H1 (cell line): ENCODE measurements at regions of chr5 and their contacts with region 1.

Region 1: DNA sequence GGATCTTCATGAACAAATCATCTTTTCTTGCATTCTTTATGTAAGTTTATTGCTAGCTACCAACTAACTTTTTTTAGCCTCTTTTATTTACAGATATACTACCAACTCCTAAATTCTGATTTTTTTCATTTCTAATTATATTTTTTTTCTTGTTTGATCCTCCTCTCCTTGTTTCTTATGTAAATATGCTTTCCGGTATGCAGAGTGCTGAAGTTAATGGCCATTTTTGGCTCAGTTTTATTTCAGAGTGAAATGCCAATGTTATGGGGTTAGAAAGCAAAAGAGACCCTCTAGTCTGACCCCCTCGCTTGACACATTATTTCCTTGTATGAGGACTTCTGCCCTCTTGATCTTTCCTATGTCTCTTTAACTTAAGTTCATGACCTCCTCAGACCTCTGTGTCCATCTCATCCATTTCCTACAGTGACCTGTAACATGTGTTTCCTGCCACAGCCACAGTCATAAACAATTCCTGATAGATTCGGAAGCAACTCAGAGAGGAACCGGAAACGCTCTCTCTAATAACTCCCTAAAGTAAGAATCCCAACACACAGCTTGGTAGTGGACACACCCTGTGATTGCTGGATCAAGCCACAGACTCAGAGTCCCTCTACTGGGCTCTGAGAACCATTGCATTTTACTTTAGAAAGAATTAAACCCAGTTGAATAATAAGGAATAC is 42.9 kb upstream of the AFAP1L1 start:
- DNase-seq: no peak
- H3K4me3 ChIP-seq: no peak overlapping the region
- H3K27ac ChIP-seq: no peak overlapping the region
- H3K4me1 ChIP-seq: peaks cover 0 to 3% (median 0%) of the 10 kb centered on the region in 4 experiments; a peak in 1 of 7 replicates
- H3K27me3 ChIP-seq: no peaks in the 10 kb centered on the region
- CTCF ChIP-seq: peak; percentile 15 to 67 (median 60)
- EP300 ChIP-seq: no peak
- POLR2A ChIP-seq: no peak
- RAD21 ChIP-seq: peak; percentile 77 to 82

Region 2: DNA sequence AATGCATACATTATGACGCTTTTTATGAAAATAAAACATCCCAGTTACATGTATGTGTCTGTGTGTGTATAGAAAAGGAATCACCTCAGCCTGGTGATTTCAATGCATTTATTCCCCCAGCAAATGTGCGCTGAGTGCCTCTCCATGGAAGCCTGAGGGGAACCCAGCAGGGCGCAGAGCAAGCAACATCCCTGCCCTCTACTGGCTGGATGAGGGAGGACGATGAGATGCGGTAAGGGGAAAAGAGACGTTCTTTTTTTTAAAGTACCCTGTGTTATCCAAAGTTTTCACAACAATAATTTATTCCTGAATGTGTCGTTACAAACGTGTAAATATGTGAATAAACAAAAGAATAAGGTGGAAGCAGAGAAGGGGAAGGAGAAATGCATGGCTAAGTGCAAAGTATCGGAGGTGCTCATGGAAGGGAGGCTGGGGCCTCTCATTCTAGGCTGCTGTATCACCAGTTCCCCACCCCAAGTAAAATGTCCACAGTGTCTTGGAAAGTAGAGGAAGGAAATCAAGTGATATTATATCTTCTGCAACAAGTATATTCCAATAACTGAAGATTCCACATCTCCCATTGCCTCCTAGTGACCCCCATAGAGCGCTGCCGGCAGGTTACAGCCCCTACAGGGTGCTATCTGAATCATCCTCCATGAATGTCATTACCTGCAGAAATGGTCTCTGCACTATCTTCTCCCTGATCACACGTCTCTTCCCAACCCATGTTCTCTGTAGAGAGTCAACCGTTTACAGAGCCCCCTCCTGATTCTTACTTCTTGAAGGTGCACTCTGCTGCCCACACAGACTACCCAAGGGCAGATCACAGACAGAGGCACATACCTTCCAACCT is 100.5 kb before region 1 on chr5:
- CTCF ChIA-PET with region 1: interaction called, 18 read pairs
- POLR2A ChIA-PET with region 1: no interaction called
- DNase-seq: peak in 1 of 2 experiments; percentile 66
- H3K4me3 ChIP-seq: no peak overlapping the region
- H3K27ac ChIP-seq: no peak overlapping the region
- H3K4me1 ChIP-seq: peaks cover 0 to 9% (median 0%) of the 10 kb centered on the region in 4 experiments; a peak in 3 of 7 replicates
- H3K27me3 ChIP-seq: no peaks in the 10 kb centered on the region
- CTCF ChIP-seq: peak; percentile 76 to 84 (median 84)
- EP300 ChIP-seq: no peak
- POLR2A ChIP-seq: no peak
- RAD21 ChIP-seq: peak; percentile 56 to 64

Region 3: DNA sequence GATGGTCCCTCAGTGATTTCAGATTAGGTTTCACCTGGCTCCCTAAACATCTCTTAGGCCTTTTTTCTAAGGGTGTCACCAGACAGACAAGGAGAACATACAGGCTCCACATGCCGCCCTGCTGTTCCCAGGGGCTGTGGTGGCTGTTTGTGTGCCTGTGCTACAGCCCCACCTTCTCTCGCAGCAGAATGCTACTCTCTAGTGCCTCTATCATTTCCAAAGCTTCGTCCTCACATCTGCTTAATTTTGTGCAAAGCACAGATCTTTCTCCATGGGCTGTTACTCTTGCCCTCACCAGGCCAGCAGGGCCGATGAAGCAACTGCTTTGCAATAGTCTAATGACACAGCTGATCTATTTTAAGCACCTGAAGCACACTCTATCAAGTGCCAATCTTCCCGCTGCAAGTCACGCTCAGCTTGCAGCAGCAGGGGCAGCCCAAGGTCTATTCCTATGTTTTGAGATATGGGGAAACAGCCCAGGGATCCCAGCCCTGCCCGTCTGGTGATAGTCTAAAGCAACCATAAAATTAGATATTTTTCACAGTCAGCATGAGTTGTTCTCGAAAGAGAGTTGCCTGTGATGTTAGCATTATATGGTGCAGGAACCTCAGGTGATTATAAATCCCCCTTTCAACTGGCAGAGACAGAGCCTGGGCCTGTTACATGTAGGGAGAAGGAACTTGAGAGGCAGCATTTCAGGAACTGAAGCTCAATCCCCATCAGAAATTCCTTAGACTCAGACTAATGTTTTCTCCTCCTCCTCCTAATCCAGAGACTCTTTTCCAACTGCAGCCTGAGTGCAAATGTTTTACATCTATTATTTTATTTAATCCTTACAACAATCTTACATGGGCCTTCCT is 74.8 kb before region 1 on chr5:
- CTCF ChIA-PET with region 1: interaction called, 13 read pairs
- POLR2A ChIA-PET with region 1: no interaction called
- DNase-seq: no peak
- H3K4me3 ChIP-seq: no peak overlapping the region
- H3K27ac ChIP-seq: no peak overlapping the region
- H3K4me1 ChIP-seq: no peaks in the 10 kb centered on the region
- H3K27me3 ChIP-seq: no peaks in the 10 kb centered on the region; a peak in 1 of 7 replicates
- CTCF ChIP-seq: no peak
- EP300 ChIP-seq: no peak
- POLR2A ChIP-seq: no peak
- RAD21 ChIP-seq: no peak

Region 4: GRCh38 chr5:149212198-149212951 is 16.4 kb before region 1 on chr5:
- CTCF ChIA-PET with region 1: interaction called, 70 read pairs
- POLR2A ChIA-PET with region 1: no interaction called
- DNase-seq: no peak
- H3K4me3 ChIP-seq: no peak overlapping the region
- H3K27ac ChIP-seq: no peak overlapping the region
- H3K4me1 ChIP-seq: no peaks in the 10 kb centered on the region
- H3K27me3 ChIP-seq: no peaks in the 10 kb centered on the region; a peak in 1 of 7 replicates
- CTCF ChIP-seq: no peak
- EP300 ChIP-seq: no peak
- POLR2A ChIP-seq: no peak
- RAD21 ChIP-seq: no peak

Region 5: DNA sequence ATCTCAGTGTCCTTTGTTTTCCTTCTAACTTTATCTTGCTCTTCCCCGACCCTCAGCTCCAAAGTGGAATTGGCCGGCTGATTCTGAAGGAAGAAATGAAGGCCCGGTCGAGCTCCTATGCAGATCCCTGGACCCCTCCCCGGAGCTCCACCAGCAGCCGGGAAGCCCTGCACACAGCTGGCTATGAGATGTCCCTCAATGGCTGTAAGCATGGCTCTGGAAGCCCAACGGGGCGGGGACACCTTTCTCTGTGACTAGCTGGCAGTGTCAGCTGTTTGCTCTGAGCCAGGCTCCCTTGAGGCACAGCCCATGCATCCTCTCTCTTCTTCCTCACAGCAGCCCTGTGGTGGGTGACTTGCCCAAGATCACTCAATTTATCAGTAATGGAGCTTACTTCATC is 19.0 kb after region 1 on chr5:
- CTCF ChIA-PET with region 1: interaction called, 99 read pairs
- POLR2A ChIA-PET with region 1: no interaction called
- DNase-seq: no peak
- H3K4me3 ChIP-seq: no peak overlapping the region
- H3K27ac ChIP-seq: no peak overlapping the region
- H3K4me1 ChIP-seq: no peaks in the 10 kb centered on the region
- H3K27me3 ChIP-seq: no peaks in the 10 kb centered on the region
- CTCF ChIP-seq: no peak
- EP300 ChIP-seq: no peak
- POLR2A ChIP-seq: no peak
- RAD21 ChIP-seq: no peak